ENCODE measurements at regions of chr22 and their contacts with region 1.

Region 1: GRCh38 chr22:36856121-36856791 is 4.5 kb upstream of the NCF4 start:
- DNase-seq: peak; percentile 94
- ATAC-seq: peak; percentile 97
- H3K4me3 Mint-ChIP-seq: peak overlapping the region; percentile 37
- H3K27ac Mint-ChIP-seq: peak overlapping the region; percentile 20; the same call in 1 of the 2 replicates
- H3K4me1 Mint-ChIP-seq: peaks cover 9% of the 10 kb centered on the region
- H3K27me3 Mint-ChIP-seq: peaks cover 29% of the 10 kb centered on the region
- CTCF ChIP-seq: peak; percentile 100

Region 2: GRCh38 chr22:36546092-36546804 is 310.0 kb before region 1 on chr22:
- CTCF ChIA-PET with region 1: interaction called, 12 read pairs
- POLR2A ChIA-PET with region 1: no interaction called
- DNase-seq: peak; percentile 79
- ATAC-seq: peak; percentile 84
- H3K4me3 Mint-ChIP-seq: peak overlapping the region; percentile 44
- H3K27ac Mint-ChIP-seq: no peak overlapping the region
- H3K4me1 Mint-ChIP-seq: peaks cover 24% of the 10 kb centered on the region
- H3K27me3 Mint-ChIP-seq: peaks cover 14% of the 10 kb centered on the region
- CTCF ChIP-seq: peak; percentile 72

Region 3: GRCh38 chr22:36775964-36776669 is 80.1 kb before region 1 on chr22 and contains the start of gene IFT27:
- CTCF ChIA-PET with region 1: interaction called, 58 read pairs
- POLR2A ChIA-PET with region 1: no interaction called
- DNase-seq: peak; percentile 97
- ATAC-seq: peak; percentile 96
- H3K4me3 Mint-ChIP-seq: peak within 1 kb of the TSS; percentile 91
- H3K27ac Mint-ChIP-seq: peak within 1 kb of the TSS; percentile 93
- H3K4me1 Mint-ChIP-seq: peaks cover 13% of the 10 kb centered on the region
- H3K27me3 Mint-ChIP-seq: peaks cover 30% of the 10 kb centered on the region
- CTCF ChIP-seq: no peak
- total RNA-seq, gene IFT27: 47.9 to 56.3 TPM (median 53.8 TPM) in 3 replicates

Region 4: DNA sequence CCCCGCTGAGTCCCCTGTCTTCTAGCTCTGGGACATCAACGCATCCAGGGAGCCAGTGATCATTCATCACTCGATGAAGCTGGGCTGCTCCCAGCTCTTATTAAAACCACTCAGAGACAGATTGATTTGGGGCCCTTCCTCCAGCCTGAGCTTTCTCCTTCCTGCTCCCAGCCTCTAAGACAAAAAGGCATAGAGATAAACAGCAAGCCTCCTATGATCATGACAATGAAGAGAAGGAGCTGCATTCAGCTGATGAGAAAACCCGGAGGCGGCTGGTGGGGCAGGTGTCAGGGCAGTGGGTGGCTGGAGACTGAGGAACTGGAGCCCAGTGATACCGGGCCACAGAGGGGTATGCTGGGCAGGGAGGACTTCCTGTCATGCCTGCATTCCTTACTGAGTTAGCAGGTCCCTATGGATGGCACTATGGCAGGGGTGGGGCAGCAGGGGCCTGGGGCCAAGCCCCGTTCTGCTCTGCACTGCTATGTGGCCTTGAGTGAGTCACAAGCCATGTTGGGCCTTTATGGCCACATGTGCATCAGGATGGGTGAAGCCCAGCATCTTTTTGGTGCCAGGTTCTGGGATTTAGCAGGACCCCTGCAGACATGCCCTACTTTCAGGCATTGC is 59.6 kb before region 1 on chr22:
- CTCF ChIA-PET with region 1: interaction called, 11 read pairs
- POLR2A ChIA-PET with region 1: interaction called, 3 read pairs
- DNase-seq: no peak
- ATAC-seq: peak; percentile 60
- H3K4me3 Mint-ChIP-seq: no peak overlapping the region
- H3K27ac Mint-ChIP-seq: no peak overlapping the region
- H3K4me1 Mint-ChIP-seq: peaks cover 43% of the 10 kb centered on the region
- H3K27me3 Mint-ChIP-seq: no peaks in the 10 kb centered on the region; the same call in none of the 2 replicates
- CTCF ChIP-seq: no peak

Region 5: GRCh38 chr22:36873680-36874537 is 17.7 kb after region 1 on chr22:
- CTCF ChIA-PET with region 1: interaction called, 12 read pairs
- POLR2A ChIA-PET with region 1: no interaction called
- DNase-seq: peak; percentile 25
- ATAC-seq: peak; percentile 85
- H3K4me3 Mint-ChIP-seq: no peak overlapping the region
- H3K27ac Mint-ChIP-seq: no peak overlapping the region
- H3K4me1 Mint-ChIP-seq: peaks cover 10% of the 10 kb centered on the region
- H3K27me3 Mint-ChIP-seq: peaks cover 8% of the 10 kb centered on the region; the same call in 1 of the 2 replicates
- CTCF ChIP-seq: no peak

Region 6: GRCh38 chr22:36911887-36912661 is 55.8 kb after region 1 on chr22:
- CTCF ChIA-PET with region 1: interaction called, 15 read pairs
- POLR2A ChIA-PET with region 1: no interaction called
- DNase-seq: no peak
- ATAC-seq: peak; percentile 82
- H3K4me3 Mint-ChIP-seq: peak overlapping the region; percentile 29
- H3K27ac Mint-ChIP-seq: peak overlapping the region; percentile 33; the same call in 1 of the 2 replicates
- H3K4me1 Mint-ChIP-seq: peaks cover 33% of the 10 kb centered on the region
- H3K27me3 Mint-ChIP-seq: peaks cover 66% of the 10 kb centered on the region
- CTCF ChIP-seq: no peak

Measured in WTC11 (cell line).